Naive thymus-derived CD8-positive, alpha-beta T cell (primary cell): ENCODE measurements at regions of chr12 and their contacts with region 1.

Region 1: DNA sequence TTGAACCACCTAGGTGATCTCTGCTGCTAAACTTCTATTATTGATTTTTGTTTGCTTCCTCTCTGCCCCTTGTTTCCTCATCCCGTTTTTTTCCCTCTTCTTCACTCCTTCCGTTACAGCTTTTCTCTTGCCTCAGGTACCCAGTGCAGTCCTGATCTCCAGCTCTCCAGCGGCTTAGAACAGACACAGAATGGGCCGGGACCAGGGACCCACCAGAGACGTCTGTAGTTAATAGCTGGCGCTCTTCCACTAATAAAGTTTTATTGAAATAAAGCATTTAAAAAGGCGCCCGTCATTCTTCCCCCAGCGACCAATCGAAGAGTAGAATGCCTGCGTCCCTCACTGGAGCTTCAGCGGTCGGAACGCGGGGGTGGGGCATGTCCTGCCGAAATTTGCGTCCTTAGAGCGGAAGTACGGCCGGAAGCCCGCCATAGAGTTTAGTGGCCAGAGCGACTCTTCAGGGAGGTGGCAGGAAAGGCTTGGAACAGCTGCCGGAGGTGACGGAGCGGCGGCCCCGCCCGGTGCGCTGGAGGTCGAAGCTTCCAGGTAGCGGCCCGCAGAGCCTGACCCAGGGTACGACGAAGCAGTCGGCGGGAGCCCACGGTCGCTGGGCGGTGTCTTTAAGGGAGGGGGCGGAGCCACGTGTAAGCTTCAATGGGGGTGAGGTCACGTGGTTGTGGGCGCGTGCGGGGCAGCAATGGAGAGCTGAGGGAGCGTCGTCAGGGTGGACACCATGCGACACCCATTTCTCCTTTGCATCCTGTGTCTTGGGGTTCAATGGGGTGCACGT is at the start of gene COPS7A:
- DNase-seq: peak; percentile 73 to 98 (median 92)
- ATAC-seq: peak; percentile 85 to 90
- H3K4me3 Mint-ChIP-seq: peak within 1 kb of the TSS; percentile 74 to 99 (median 93)
- H3K27ac Mint-ChIP-seq: peak within 1 kb of the TSS; percentile 92 to 98 (median 96)
- H3K4me1 Mint-ChIP-seq: peaks cover 19 to 32% (median 24%) of the 10 kb centered on the region in 4 donors
- H3K27me3 Mint-ChIP-seq: no peaks in the 10 kb centered on the region
- polyA plus RNA-seq, gene COPS7A: 34.9 to 42.4 (median 36.2) TPM

Region 2: GRCh38 chr12:6662906-6663742 is 60.7 kb before region 1 on chr12 and contains the start of gene ING4:
- POLR2A ChIA-PET with region 1: interaction called, 22 read pairs
- DNase-seq: peak; percentile 83 to 99 (median 97)
- ATAC-seq: peak; percentile 98 to 99
- H3K4me3 Mint-ChIP-seq: peak within 1 kb of the TSS; percentile 89 to 100 (median 93)
- H3K27ac Mint-ChIP-seq: peak within 1 kb of the TSS; percentile 91 to 100 (median 97)
- H3K4me1 Mint-ChIP-seq: peaks cover 18 to 42% (median 35%) of the 10 kb centered on the region in 4 donors
- H3K27me3 Mint-ChIP-seq: no peaks in the 10 kb centered on the region
- polyA plus RNA-seq, gene ING4: 89.5 to 99.6 (median 90.6) TPM

Region 3: GRCh38 chr12:6708960-6709394 is 14.8 kb before region 1 on chr12:
- POLR2A ChIA-PET with region 1: interaction called, 16 read pairs
- DNase-seq: peak in 7 of 10 donors; percentile 23 to 74 (median 56)
- ATAC-seq: peak; percentile 65 to 90
- H3K4me3 Mint-ChIP-seq: peak overlapping the region; percentile 78 to 97 (median 89)
- H3K27ac Mint-ChIP-seq: peak overlapping the region; percentile 53 to 97 (median 92)
- H3K4me1 Mint-ChIP-seq: peaks cover 6 to 13% (median 10%) of the 10 kb centered on the region in 4 donors
- H3K27me3 Mint-ChIP-seq: peaks cover 10 to 28% (median 17%) of the 10 kb centered on the region in 5 donors